Activated CD8-positive, alpha-beta T cell treated with anti-CD3 and anti-CD28 coated beads for 36 hours (primary cell): ENCODE measurements at regions of chr5 and their contacts with region 1.

Region 1: DNA sequence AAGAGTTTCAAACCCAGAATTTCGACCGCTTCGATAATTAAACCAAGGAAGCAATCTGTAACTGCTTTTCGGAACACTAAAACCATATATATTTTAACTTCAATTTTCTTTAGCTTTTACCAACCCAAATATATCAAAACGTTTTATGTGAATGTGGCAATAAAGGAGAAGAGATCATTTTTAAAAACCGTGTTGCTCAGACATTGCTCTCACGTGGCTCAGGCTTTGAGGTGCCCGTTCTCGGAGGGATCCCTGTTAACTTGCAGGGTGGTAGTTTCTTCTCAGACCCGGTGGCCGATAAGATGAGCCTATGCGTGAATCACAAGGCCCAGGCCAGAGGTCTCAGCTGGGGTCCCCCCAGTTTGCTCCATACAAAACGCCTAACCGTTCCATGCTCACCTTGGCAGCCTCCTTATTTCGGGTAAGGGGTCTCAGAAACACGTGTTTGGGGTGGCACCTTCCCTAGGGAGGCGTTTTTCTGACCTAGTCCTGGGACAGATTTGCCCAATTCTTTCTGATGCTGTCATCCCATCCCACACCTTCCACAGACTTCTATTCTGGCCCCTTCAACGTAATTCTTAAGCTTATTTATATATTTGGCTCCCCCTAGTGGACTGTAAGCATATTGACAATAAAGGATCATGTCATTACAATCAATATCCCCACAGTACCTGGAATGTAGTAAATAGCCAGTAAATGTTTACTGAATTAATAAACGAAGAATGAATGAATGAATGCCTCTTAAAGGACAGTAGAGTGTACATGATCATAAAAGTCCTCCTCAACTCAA is 48.1 kb downstream of the THBS4 start:
- DNase-seq: peak; percentile 34
- ATAC-seq: peak; percentile 84
- H3K4me3 Mint-ChIP-seq: peak overlapping the region; percentile 51
- H3K27ac Mint-ChIP-seq: peak overlapping the region; percentile 78
- H3K4me1 Mint-ChIP-seq: peaks cover 11% of the 10 kb centered on the region
- H3K27me3 Mint-ChIP-seq: no peaks in the 10 kb centered on the region
- CTCF ChIP-seq: peak; percentile 55

Region 2: DNA sequence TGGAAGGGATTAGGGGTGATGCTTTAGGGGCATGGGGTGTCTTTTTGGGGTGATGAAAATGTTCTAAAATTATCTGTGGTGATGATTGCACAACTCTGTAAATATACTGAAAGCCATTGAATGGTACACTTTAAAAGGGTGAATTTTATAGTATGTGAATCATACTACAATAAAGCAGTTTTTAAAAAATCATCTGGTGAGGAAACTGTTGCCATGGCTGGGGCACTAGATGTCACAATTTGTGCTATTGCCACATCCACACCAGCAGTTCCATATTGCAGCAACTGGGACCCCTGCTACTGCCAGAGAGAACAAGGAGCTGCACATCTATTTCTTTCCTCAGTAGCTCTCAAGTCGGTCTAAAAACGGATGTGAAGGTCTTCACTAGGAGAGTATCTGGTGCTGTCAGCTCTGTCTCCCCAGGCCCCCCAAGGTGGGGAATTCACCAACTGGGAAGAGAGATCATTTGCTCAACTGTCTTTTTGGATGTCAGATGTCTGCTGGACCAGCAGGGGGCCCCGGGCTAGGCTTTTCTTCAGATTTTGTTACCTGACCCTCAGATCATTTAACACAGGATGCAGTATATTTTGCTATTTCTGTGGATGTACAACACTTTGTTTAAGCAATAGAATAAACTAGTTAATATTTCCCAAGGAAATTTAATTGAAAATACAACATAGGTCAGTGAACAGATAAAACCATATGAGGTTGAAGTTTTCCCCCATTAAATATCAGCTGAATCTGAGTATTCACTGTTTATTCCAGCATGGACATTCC is 380.5 kb before region 1 on chr5:
- CTCF ChIA-PET with region 1: interaction called, 10 read pairs
- POLR2A ChIA-PET with region 1: no interaction called
- intact Hi-C with region 1: no loop called
- DNase-seq: peak; percentile 54
- ATAC-seq: peak; percentile 60
- H3K4me3 Mint-ChIP-seq: no peak overlapping the region
- H3K27ac Mint-ChIP-seq: no peak overlapping the region
- H3K4me1 Mint-ChIP-seq: peaks cover 12% of the 10 kb centered on the region
- H3K27me3 Mint-ChIP-seq: no peaks in the 10 kb centered on the region
- CTCF ChIP-seq: peak; percentile 76

Region 3: GRCh38 chr5:79878721-79879336 is 204.5 kb before region 1 on chr5:
- CTCF ChIA-PET with region 1: interaction called, 37 read pairs
- POLR2A ChIA-PET with region 1: no interaction called
- intact Hi-C with region 1: loop called (anchors 5 kb)
- DNase-seq: peak; percentile 65
- ATAC-seq: peak; percentile 78
- H3K4me3 Mint-ChIP-seq: no peak overlapping the region
- H3K27ac Mint-ChIP-seq: no peak overlapping the region
- H3K4me1 Mint-ChIP-seq: no peaks in the 10 kb centered on the region
- H3K27me3 Mint-ChIP-seq: no peaks in the 10 kb centered on the region
- CTCF ChIP-seq: peak; percentile 77

Region 4: DNA sequence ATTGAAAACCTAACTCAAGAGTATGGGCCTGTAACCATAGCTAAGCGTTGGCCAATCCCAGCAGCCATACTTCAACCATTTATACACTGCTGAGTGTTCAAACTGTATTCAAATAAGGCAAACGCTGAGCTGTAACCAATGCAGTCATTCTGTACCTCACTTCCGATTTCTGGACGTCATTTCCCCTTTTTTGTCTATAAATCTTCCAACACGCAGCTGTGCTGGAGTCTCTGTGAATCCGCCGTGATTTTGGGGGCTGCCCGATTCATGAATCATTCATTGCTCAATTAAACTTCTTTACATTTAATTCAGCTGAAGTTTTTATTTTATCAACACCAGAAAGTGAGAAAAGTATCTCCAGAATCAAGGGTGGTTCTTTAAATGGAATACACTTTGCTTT is 123.9 kb before region 1 on chr5:
- CTCF ChIA-PET with region 1: interaction called, 13 read pairs
- POLR2A ChIA-PET with region 1: no interaction called
- intact Hi-C with region 1: no loop called
- DNase-seq: no peak
- ATAC-seq: no peak
- H3K4me3 Mint-ChIP-seq: no peak overlapping the region
- H3K27ac Mint-ChIP-seq: no peak overlapping the region
- H3K4me1 Mint-ChIP-seq: peaks cover 18% of the 10 kb centered on the region
- H3K27me3 Mint-ChIP-seq: no peaks in the 10 kb centered on the region
- CTCF ChIP-seq: no peak

Region 5: DNA sequence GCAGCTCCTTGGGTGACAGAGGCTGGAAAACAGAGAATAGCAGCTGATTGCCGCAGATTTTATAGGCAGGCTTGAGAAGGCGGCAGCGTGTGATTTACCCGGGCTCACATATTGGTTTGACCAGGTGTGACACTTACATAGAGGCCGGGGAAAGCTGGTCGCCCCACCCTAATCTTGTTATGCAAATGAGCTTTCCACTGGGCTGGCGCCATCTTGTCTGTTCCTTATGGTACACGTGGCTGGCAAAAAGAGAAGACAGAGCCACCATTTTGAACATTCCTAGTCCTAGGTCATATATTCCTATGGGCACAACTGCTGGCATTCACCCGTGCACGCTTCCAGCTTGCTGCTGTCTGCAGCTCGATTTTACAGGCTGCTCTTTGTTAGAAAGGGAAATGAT is 225.2 kb after region 1 on chr5:
- CTCF ChIA-PET with region 1: interaction called, 28 read pairs
- POLR2A ChIA-PET with region 1: interaction called, 3 read pairs
- intact Hi-C with region 1: no loop called
- DNase-seq: no peak
- ATAC-seq: no peak
- H3K4me3 Mint-ChIP-seq: no peak overlapping the region
- H3K27ac Mint-ChIP-seq: no peak overlapping the region
- H3K4me1 Mint-ChIP-seq: no peaks in the 10 kb centered on the region
- H3K27me3 Mint-ChIP-seq: no peaks in the 10 kb centered on the region
- CTCF ChIP-seq: no peak